A673 (cell line): ENCODE measurements at regions of chrX and their contacts with region 1.

Region 1: GRCh38 chrX:85544609-85545008 is 165.1 kb upstream of the POF1B start:
- DNase-seq: peak; percentile 3
- H3K4me3 ChIP-seq: no peak overlapping the region
- H3K27ac ChIP-seq: no peak overlapping the region
- H3K4me1 ChIP-seq: no peaks in the 10 kb centered on the region
- H3K27me3 ChIP-seq: no peaks in the 10 kb centered on the region
- CTCF ChIP-seq: peak; percentile 59; the same call in 1 of the 2 replicates

Region 2: DNA sequence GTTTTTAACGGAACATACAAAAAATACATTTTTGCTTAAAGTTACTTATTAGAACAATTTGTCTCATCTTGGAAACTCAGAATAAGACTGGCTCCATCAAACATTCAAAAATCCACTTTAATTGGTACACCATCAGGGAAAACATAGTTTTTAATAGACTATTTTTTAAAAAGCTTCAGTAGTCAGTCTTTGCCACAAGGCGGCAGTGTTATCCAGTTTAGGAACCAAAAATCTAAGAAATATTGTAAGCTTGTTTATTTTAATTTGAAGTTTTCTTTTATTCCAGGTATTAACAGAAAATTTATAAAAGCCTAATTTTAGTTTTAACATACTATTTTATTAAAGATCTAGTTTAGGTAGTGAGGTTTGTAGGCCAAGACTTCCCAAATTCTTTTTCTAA is 433.3 kb before region 1 on chrX:
- CTCF ChIA-PET with region 1: no interaction called
- POLR2A ChIA-PET with region 1: no interaction called
- intact Hi-C with region 1: loop called (anchors 2 kb)
- DNase-seq: peak; percentile 19
- H3K4me3 ChIP-seq: no peak overlapping the region
- H3K27ac ChIP-seq: no peak overlapping the region
- H3K4me1 ChIP-seq: no peaks in the 10 kb centered on the region
- H3K27me3 ChIP-seq: no peaks in the 10 kb centered on the region
- CTCF ChIP-seq: peak; percentile 81